ENCODE measurements at regions of chr18 and their contacts with region 1.

Region 1: DNA sequence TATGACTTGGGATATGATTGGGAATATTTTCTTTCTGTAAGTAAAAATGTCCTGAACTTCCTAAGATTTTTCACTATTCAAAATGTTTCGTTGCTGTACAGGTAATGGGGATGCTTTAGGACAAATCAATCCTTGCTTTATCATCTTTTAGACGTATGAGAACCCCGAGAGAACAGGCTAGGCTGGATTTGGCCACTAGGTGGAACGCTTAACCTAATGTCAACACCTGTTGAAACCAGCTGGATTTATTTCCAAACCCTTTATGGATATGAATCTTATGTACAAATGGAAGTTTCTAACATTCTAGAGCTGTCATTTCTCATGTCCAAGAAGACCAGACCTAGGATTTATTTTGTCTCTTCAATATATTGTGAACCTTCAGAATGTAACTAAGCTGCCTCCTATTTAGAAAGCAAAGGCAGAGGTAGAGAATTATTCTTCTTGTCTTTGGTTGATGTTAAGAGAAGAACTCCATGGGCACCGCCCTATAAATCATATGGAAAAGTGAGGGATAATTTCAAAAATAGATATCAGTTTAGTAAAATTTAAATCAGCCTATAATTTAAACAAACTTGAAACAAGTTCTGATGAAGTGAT is 96.7 kb downstream of the PMAIP1 start:
- DNase-seq: peak in 1 of 2 experiments; percentile 14
- H3K4me3 ChIP-seq: no peak overlapping the region
- H3K4me3 Mint-ChIP-seq: no peak overlapping the region
- H3K27ac Mint-ChIP-seq: no peak overlapping the region
- H3K4me1 ChIP-seq: no peaks in the 10 kb centered on the region
- H3K4me1 Mint-ChIP-seq: no peaks in the 10 kb centered on the region
- H3K27me3 ChIP-seq: no peaks in the 10 kb centered on the region
- H3K27me3 Mint-ChIP-seq: peaks cover 3% of the 10 kb centered on the region
- CTCF ChIP-seq: peak; percentile 34 to 47

Region 2: GRCh38 chr18:59941331-59941730 is 55.1 kb before region 1 on chr18:
- CTCF ChIA-PET with region 1: no interaction called
- POLR2A ChIA-PET with region 1: no interaction called
- intact Hi-C with region 1: no loop called
- DNase-seq: no peak
- H3K4me3 ChIP-seq: no peak overlapping the region
- H3K4me3 Mint-ChIP-seq: no peak overlapping the region
- H3K27ac Mint-ChIP-seq: no peak overlapping the region
- H3K4me1 ChIP-seq: no peaks in the 10 kb centered on the region
- H3K4me1 Mint-ChIP-seq: no peaks in the 10 kb centered on the region
- H3K27me3 ChIP-seq: no peaks in the 10 kb centered on the region
- H3K27me3 Mint-ChIP-seq: no peaks in the 10 kb centered on the region
- CTCF ChIP-seq: no peak

Region 3: DNA sequence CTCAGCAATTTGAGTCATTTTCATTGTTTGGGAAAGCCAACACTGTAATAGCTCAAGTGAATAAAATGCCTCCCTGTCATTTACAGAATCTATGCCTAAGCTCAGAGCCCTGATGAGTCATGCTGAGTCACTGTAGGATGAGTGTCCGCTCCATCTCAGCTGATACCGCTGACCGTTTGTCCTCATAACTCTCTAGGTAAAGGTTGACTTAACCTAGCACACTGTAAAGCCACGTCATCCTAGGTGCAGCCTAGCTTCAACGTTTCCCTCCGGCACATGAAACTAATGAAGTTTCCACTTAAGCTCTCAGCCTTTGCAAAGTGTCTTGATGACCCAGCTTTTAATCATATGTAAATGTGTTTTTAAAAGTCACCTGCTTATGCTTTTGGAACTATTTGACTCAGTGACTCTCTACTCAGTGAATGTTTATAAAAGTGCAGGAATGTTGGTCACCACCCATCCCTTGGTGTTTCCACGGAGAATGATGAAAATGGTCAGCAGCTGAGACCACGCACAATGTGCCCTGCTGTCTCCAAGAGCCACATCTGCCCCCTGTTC is 57.4 kb after region 1 on chr18:
- CTCF ChIA-PET with region 1: no interaction called
- POLR2A ChIA-PET with region 1: no interaction called
- intact Hi-C with region 1: loop called (anchors 10 kb)
- DNase-seq: peak; percentile 2 to 48
- H3K4me3 ChIP-seq: no peak overlapping the region
- H3K4me3 Mint-ChIP-seq: peak overlapping the region; percentile 11
- H3K27ac Mint-ChIP-seq: no peak overlapping the region
- H3K4me1 ChIP-seq: no peaks in the 10 kb centered on the region
- H3K4me1 Mint-ChIP-seq: no peaks in the 10 kb centered on the region
- H3K27me3 ChIP-seq: no peaks in the 10 kb centered on the region
- H3K27me3 Mint-ChIP-seq: no peaks in the 10 kb centered on the region
- CTCF ChIP-seq: no peak

Region 4: DNA sequence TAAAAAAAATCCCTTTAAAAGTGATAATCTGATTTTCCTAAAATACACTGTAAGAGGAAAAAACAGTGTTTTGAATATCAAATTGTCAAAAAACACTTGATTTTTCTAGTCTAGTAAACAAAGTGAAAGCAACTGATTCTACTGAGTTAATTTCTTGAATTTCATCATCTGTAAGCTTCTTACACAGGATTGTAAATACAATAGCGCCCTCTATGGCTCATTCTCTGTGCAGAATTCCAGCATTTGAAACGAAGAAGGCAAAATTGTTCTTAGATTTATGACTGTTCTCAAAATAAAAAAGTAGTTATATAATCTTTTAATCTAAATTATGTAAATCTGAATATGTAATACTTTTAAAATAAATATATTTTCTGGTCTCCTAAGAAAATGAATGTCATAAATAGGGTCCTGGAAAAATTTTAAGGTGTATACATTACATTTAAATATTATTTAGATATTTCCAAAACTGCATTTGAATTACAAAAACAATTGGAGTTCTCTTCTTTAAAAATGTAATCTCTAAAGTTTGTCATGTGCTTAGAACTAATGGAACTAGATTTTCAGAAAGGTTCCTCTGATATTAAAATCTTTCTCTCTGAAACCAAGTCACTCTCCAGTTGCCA is 553.0 kb after region 1 on chr18:
- CTCF ChIA-PET with region 1: no interaction called
- POLR2A ChIA-PET with region 1: no interaction called
- intact Hi-C with region 1: loop called (anchors 2 kb)
- DNase-seq: peak in 1 of 2 experiments; percentile 21
- H3K4me3 ChIP-seq: no peak overlapping the region
- H3K4me3 Mint-ChIP-seq: no peak overlapping the region
- H3K27ac Mint-ChIP-seq: no peak overlapping the region
- H3K4me1 ChIP-seq: no peaks in the 10 kb centered on the region
- H3K4me1 Mint-ChIP-seq: no peaks in the 10 kb centered on the region
- H3K27me3 ChIP-seq: no peaks in the 10 kb centered on the region
- H3K27me3 Mint-ChIP-seq: no peaks in the 10 kb centered on the region
- CTCF ChIP-seq: peak; percentile 28 to 55

Measured in Caco-2 (cell line).